Left ventricle myocardium superior (tissue), 1 donor: ENCODE measurements at regions of chr11 and their contacts with region 1.

Region 1: GRCh38 chr11:83292709-83293456 is 6.7 kb upstream of the CCDC90B start:
- DNase-seq: no peak
- ATAC-seq: peak; percentile 59

Region 2: GRCh38 chr11:83156150-83156995 is 136.5 kb before region 1 on chr11:
- intact Hi-C with region 1: no loop called
- DNase-seq: peak; percentile 99
- ATAC-seq: peak; percentile 95

Region 3: DNA sequence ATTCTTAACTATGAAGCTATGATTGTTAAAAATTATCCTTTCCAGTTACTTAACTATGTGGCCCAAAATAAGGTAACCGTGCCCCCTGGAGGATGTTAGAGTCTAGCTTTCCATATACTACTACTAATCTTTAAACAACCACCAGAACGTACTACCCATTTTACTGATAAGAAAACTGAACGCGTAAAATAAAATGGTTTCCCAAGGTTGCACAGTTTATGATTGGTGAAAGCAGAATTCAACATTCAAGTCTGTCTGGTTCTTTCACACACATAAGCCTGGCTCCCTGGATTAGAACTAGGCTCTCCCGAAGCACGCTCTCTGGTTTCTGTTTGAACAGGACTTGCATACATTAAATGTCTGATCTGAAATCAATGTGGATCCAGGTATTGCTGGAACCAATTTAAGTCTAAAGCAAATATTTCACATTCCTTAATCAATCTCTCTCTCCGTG is 431.2 kb after region 1 on chr11:
- intact Hi-C with region 1: loop called (anchors 5 kb)
- DNase-seq: no peak
- ATAC-seq: peak; percentile 89

Region 4: DNA sequence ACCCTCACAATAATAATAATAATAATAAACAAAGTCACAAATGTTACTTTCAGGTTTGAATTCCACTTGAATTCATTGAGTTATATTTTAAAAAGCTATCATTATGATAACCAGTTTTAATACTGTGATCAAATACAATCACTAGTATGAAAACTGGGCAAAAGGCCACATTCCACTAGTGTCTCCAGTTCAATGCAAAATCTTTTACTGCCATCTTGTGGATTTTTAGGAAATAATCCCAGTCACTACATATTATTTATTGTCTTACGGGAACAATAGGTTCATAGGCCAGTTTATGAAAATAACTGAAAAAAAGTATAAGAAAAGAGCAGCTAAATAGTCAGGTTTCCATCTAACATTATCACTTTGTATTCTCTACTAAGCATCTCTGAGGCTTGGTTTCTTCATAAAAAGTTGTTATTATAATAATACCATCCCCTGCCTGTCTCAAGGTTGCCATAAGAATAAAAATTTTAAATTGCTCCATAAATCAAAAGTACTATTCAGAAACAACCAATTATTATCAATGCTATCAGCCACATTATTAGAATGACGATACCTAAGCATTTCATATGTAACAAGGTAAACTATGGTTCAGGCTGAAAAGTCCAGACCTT is 527.2 kb after region 1 on chr11:
- intact Hi-C with region 1: loop called (anchors 10 kb)
- DNase-seq: no peak
- ATAC-seq: peak; percentile 43